ENCODE measurements at regions of chr18 and their contacts with region 1.

Region 1: GRCh38 chr18:48777026-48777743 is 173.6 kb downstream of the SMAD7 start:
- DNase-seq: peak; percentile 40 to 64 (median 63)
- H3K4me3 ChIP-seq: no peak overlapping the region
- H3K4me3 Mint-ChIP-seq: no peak overlapping the region
- H3K27ac ChIP-seq: no peak overlapping the region
- H3K27ac Mint-ChIP-seq: no peak overlapping the region
- H3K4me1 ChIP-seq: peaks cover 21 to 40% of the 10 kb centered on the region in 2 donors
- H3K4me1 Mint-ChIP-seq: peaks cover 31% of the 10 kb centered on the region
- H3K27me3 ChIP-seq: no peaks in the 10 kb centered on the region
- H3K27me3 Mint-ChIP-seq: peaks cover 4 to 17% (median 12%) of the 10 kb centered on the region in 3 donors
- CTCF ChIP-seq: peak; percentile 92

Region 2: DNA sequence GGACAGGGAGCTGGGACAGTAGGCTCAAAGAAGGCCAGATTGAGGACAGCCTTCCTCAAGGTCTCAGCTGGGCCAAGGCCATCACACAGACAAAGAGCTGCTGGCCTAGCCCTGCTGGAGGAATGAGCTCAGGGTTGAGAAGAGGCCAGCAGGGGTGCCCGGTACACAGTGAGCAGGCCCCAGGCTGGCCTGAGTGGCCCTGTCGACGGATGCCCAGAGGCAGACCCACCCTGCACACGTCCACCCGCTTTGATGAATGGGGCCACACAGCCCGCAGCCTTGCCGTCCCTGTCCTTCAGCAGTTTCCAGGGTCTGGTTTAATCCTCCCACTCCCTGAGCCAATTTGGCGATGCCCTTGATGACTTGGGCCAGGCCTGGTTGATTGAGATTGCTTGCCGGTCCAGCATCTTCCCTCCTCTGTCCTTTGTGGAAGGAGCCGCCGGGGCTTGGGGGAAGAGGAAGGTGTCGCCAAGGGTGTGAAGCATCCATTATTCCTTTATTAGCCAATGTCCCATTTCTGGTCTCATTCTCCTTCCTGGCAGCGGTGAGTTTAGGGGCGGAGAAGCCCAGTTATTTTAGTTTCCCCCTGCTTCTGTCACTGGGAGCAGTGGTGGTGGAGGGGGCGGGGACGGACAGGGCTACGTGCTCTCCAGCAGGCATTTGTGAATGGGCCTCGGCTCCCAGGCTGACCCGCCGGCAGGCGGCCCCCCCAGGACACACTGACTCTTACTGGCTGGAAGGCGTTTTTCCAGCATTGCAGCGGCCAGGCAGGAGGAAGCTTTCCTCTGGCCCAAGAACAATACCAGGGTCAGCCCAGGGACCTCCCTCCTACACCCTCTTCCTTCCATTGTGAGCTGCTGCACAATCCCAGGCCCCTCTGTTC is 96.6 kb before region 1 on chr18:
- intact Hi-C with region 1: loop called in 1 of 2 experiments (anchors 5 kb)
- DNase-seq: no peak
- H3K4me3 ChIP-seq: no peak overlapping the region
- H3K4me3 Mint-ChIP-seq: no peak overlapping the region
- H3K27ac ChIP-seq: no peak overlapping the region
- H3K27ac Mint-ChIP-seq: no peak overlapping the region
- H3K4me1 ChIP-seq: peaks cover 29 to 35% of the 10 kb centered on the region in 2 donors
- H3K4me1 Mint-ChIP-seq: peaks cover 39% of the 10 kb centered on the region
- H3K27me3 ChIP-seq: no peaks in the 10 kb centered on the region
- H3K27me3 Mint-ChIP-seq: peaks cover 1 to 5% (median 1%) of the 10 kb centered on the region in 3 donors
- CTCF ChIP-seq: no peak

Region 3: GRCh38 chr18:48834413-48835031 is 57.3 kb after region 1 on chr18:
- intact Hi-C with region 1: loop called in 1 of 2 experiments (anchors 10 kb)
- DNase-seq: peak; percentile 98 to 100 (median 99)
- H3K4me3 ChIP-seq: peak overlapping the region in 1 of 3 experiments; percentile 36
- H3K4me3 Mint-ChIP-seq: peak overlapping the region; percentile 70 to 74
- H3K27ac ChIP-seq: peak overlapping the region; percentile 58 to 81
- H3K27ac Mint-ChIP-seq: peak overlapping the region; percentile 87 to 95 (median 93)
- H3K4me1 ChIP-seq: peaks cover 43 to 63% of the 10 kb centered on the region in 2 donors
- H3K4me1 Mint-ChIP-seq: peaks cover 53% of the 10 kb centered on the region
- H3K27me3 ChIP-seq: no peaks in the 10 kb centered on the region
- H3K27me3 Mint-ChIP-seq: peaks cover 3 to 12% (median 10%) of the 10 kb centered on the region in 3 donors
- CTCF ChIP-seq: no peak

Region 4: DNA sequence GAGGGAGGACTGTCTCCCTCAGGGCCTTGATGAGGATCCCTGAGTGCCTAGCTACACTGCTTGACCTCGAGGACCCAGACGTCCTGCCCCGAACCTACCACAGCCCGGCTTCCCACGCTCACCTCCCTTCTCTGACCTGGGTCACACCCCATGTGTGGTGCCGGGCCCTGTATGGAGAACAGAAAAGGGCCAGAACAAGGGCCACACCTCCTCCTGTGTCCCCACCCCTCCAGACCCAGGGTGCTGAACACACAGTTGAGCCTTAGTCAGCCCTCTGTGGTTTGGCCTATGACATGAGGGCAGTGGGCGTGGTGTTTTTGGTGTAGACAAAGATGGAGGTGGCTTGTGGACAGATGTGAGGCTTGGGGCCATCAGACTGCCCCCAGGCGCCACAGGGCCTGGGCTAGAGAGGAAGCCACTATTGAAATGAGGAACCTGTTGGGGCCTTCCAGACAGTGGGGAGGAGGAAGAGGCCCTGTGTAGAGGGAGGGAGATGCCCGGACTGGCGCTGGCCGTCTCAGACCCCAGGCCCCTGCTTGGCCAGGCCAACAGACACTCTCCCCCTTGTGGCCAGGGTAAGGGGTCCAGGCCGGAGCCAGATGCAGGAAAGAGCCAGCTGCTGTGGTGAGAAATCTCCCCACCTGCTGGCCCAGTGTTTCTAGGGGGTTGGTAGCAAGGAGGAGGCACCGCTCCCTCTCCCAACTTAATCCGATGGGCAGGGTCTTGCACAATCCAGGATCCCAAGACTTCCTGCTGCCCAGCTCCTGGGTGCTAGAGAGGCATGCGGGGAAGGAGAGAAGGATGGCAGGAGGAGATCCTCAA is 119.7 kb after region 1 on chr18:
- intact Hi-C with region 1: loop called in 1 of 2 experiments (anchors 5 kb)
- DNase-seq: peak; percentile 99 to 100 (median 100)
- H3K4me3 ChIP-seq: peak overlapping the region in 1 of 3 experiments; percentile 50
- H3K4me3 Mint-ChIP-seq: peak overlapping the region; percentile 56 to 74
- H3K27ac ChIP-seq: peak overlapping the region; percentile 90 to 93
- H3K27ac Mint-ChIP-seq: peak overlapping the region; percentile 93 to 99 (median 97)
- H3K4me1 ChIP-seq: peaks cover 43 to 47% of the 10 kb centered on the region in 2 donors
- H3K4me1 Mint-ChIP-seq: peaks cover 48% of the 10 kb centered on the region
- H3K27me3 ChIP-seq: no peaks in the 10 kb centered on the region
- H3K27me3 Mint-ChIP-seq: no peaks in the 10 kb centered on the region
- CTCF ChIP-seq: peak; percentile 55

Region 5: GRCh38 chr18:49238433-49239042 is 461.4 kb after region 1 on chr18:
- intact Hi-C with region 1: loop called (anchors 10 kb)
- DNase-seq: peak in 2 of 3 donors; percentile 16 to 23
- H3K4me3 ChIP-seq: no peak overlapping the region
- H3K4me3 Mint-ChIP-seq: no peak overlapping the region
- H3K27ac ChIP-seq: no peak overlapping the region
- H3K27ac Mint-ChIP-seq: no peak overlapping the region
- H3K4me1 ChIP-seq: no peaks in the 10 kb centered on the region
- H3K4me1 Mint-ChIP-seq: no peaks in the 10 kb centered on the region
- H3K27me3 ChIP-seq: no peaks in the 10 kb centered on the region
- H3K27me3 Mint-ChIP-seq: no peaks in the 10 kb centered on the region
- CTCF ChIP-seq: peak; percentile 54

Region 6: GRCh38 chr18:49249521-49249920 is 472.3 kb after region 1 on chr18:
- intact Hi-C with region 1: loop called in 1 of 2 experiments (anchors 10 kb)
- DNase-seq: peak; percentile 80 to 93 (median 92)
- H3K4me3 ChIP-seq: peak overlapping the region in 1 of 3 experiments; percentile 2
- H3K4me3 Mint-ChIP-seq: peak overlapping the region in 1 of 2 donors; percentile 39
- H3K27ac ChIP-seq: peak overlapping the region in 1 of 2 donors; percentile 74
- H3K27ac Mint-ChIP-seq: peak overlapping the region; percentile 77 to 91 (median 86)
- H3K4me1 ChIP-seq: peaks cover 23 to 24% of the 10 kb centered on the region in 2 donors
- H3K4me1 Mint-ChIP-seq: peaks cover 20% of the 10 kb centered on the region
- H3K27me3 ChIP-seq: no peaks in the 10 kb centered on the region
- H3K27me3 Mint-ChIP-seq: no peaks in the 10 kb centered on the region
- CTCF ChIP-seq: no peak